ENCODE measurements at regions of chr5 and their contacts with region 1.

Region 1: GRCh38 chr5:122091936-122092600 is 14.0 kb upstream of the LOX start:
- DNase-seq: no peak
- H3K4me3 ChIP-seq: no peak overlapping the region
- H3K27ac ChIP-seq: no peak overlapping the region
- H3K4me1 ChIP-seq: no peaks in the 10 kb centered on the region
- H3K27me3 ChIP-seq: no peaks in the 10 kb centered on the region
- CTCF ChIP-seq: peak in 4 of 6 experiments; percentile 35 to 66 (median 48)
- POLR2A ChIP-seq: no peak

Region 2: GRCh38 chr5:121968910-121969607 is 123.0 kb before region 1 on chr5:
- intact Hi-C with region 1: loop called (anchors 10 kb)
- DNase-seq: no peak
- H3K4me3 ChIP-seq: no peak overlapping the region
- H3K27ac ChIP-seq: peak overlapping the region; percentile 11 to 59 (median 22)
- H3K4me1 ChIP-seq: peaks cover 9 to 35% (median 11%) of the 10 kb centered on the region in 3 donors
- H3K27me3 ChIP-seq: no peaks in the 10 kb centered on the region
- CTCF ChIP-seq: no peak
- POLR2A ChIP-seq: no peak

Region 3: DNA sequence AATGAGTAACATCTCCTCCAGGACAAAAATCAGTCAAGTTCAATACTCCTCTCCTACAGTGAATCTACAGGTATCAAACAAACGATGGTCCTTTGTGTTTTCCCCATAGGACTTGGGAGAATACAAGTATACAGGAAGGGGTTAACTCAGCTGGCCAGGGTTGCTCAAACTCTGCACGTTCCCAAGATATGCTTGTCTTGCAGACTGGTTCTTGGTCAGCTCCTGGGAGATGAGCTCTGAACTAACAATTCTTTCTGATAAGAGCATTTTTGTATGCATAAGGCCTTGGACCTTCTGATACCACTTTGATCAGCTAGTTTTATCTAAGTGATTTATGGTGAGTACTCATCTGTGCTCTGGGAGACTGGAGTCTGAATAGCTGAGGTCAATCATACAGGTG is 56.2 kb before region 1 on chr5:
- intact Hi-C with region 1: no loop called
- DNase-seq: no peak
- H3K4me3 ChIP-seq: no peak overlapping the region
- H3K27ac ChIP-seq: no peak overlapping the region
- H3K4me1 ChIP-seq: no peaks in the 10 kb centered on the region
- H3K27me3 ChIP-seq: no peaks in the 10 kb centered on the region
- CTCF ChIP-seq: no peak
- POLR2A ChIP-seq: no peak

Region 4: DNA sequence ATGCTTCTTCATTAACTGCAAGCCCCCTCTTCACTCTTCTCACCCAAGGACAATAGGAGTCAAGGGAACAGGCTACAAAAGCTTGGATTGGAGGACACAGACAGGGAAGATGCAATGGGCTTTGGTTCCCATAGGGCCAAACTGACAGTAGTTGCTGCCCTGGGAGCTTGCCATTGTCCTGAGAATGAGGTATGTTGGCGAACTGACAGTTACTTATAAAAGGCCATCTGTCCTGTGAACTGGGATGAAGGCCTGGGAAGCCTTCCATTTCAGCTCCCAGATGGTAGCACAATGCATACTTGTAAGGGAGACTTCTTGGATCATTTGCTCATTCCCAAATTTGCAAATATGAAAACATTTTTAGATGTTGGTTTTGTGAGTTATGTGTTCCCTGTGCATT is 308.9 kb after region 1 on chr5:
- intact Hi-C with region 1: no loop called
- DNase-seq: no peak
- H3K4me3 ChIP-seq: no peak overlapping the region
- H3K27ac ChIP-seq: no peak overlapping the region
- H3K4me1 ChIP-seq: peaks cover 0 to 12% (median 3%) of the 10 kb centered on the region in 3 donors
- H3K27me3 ChIP-seq: no peaks in the 10 kb centered on the region
- CTCF ChIP-seq: no peak
- POLR2A ChIP-seq: no peak

Region 5: GRCh38 chr5:122415030-122415800 is 323.1 kb after region 1 on chr5:
- intact Hi-C with region 1: loop called (anchors 10 kb)
- DNase-seq: no peak
- H3K4me3 ChIP-seq: no peak overlapping the region
- H3K27ac ChIP-seq: no peak overlapping the region
- H3K4me1 ChIP-seq: no peaks in the 10 kb centered on the region
- H3K27me3 ChIP-seq: no peaks in the 10 kb centered on the region
- CTCF ChIP-seq: peak in 5 of 6 experiments; percentile 45 to 75 (median 54)
- POLR2A ChIP-seq: no peak

Region 6: DNA sequence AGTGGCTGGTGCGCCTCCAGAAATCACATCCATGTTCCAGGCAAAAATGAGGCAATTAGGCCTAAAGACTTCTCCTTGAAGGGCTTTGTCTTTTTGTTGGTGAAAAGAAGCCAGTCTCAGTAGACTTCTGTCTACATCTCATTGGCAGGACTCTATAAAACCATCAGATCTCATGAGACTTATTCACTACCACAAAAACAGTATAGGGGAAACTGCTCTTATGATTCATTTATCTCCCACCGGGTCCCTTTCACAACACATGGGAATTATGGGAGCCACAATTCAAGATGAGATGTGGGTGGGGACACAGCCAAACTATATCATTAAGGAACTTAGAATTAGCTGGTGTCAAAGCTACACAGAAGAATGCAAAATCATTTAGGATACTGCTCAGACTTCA is 605.1 kb after region 1 on chr5:
- intact Hi-C with region 1: no loop called
- DNase-seq: no peak
- H3K4me3 ChIP-seq: no peak overlapping the region
- H3K27ac ChIP-seq: no peak overlapping the region
- H3K4me1 ChIP-seq: no peaks in the 10 kb centered on the region
- H3K27me3 ChIP-seq: no peaks in the 10 kb centered on the region
- CTCF ChIP-seq: no peak
- POLR2A ChIP-seq: no peak